ENCODE measurements at regions of chr9 and their contacts with region 1.

Region 1: DNA sequence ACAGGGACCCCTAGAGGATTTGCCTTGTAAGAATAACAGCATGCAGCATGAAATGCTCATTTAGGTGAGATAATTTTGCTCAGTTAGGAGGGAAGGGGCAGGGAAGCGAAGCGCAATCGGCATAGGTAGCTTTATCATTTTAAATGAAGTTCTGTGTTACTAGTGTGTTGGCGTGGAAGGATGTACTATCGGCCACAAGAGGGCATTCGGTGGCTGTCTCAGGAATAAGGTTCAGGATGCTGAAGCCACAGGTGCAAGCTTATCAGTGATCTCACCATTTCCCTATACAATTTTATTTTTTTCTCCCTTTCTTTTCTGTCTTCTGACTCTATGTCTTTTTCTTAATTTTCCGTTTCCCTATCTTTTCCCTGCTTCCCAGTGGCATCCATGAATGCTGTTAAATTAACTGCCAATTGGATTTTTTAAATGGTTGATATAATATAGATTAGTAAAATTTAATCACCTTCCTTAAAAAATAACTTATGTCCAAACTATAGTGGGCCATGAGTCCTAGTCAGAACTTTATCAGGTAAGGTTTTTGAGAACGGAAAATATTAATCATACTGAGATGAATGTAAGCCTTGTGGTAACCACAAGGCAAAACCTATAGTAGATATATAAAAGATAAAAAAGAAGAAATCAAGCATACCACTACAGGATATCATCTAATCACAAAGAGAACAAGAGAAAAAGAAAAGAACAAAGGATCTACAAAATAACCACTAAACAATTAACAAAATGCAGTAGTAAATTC is 1.2 kb upstream of the INSL6 start:
- DNase-seq: peak; percentile 39
- H3K4me3 Mint-ChIP-seq: no peak overlapping the region
- H3K27ac Mint-ChIP-seq: peak overlapping the region; percentile 3
- H3K4me1 Mint-ChIP-seq: peaks cover 22% of the 10 kb centered on the region
- H3K27me3 Mint-ChIP-seq: peaks cover 17% of the 10 kb centered on the region

Region 2: GRCh38 chr9:4750023-4750673 is 436.4 kb before region 1 on chr9:
- intact Hi-C with region 1: loop called (anchors 5 kb)
- DNase-seq: no peak
- H3K4me3 Mint-ChIP-seq: no peak overlapping the region
- H3K27ac Mint-ChIP-seq: no peak overlapping the region
- H3K4me1 Mint-ChIP-seq: peaks cover 12% of the 10 kb centered on the region
- H3K27me3 Mint-ChIP-seq: peaks cover 12% of the 10 kb centered on the region

Region 3: GRCh38 chr9:5425006-5425628 is 238.5 kb after region 1 on chr9:
- intact Hi-C with region 1: loop called (anchors 1 kb)
- DNase-seq: no peak
- H3K4me3 Mint-ChIP-seq: no peak overlapping the region
- H3K27ac Mint-ChIP-seq: no peak overlapping the region
- H3K4me1 Mint-ChIP-seq: peaks cover 9% of the 10 kb centered on the region
- H3K27me3 Mint-ChIP-seq: no peaks in the 10 kb centered on the region

Region 4: GRCh38 chr9:5596173-5596572 is 409.6 kb after region 1 on chr9:
- intact Hi-C with region 1: loop called (anchors 1 kb)
- DNase-seq: no peak
- H3K4me3 Mint-ChIP-seq: no peak overlapping the region
- H3K27ac Mint-ChIP-seq: no peak overlapping the region
- H3K4me1 Mint-ChIP-seq: peaks cover 32% of the 10 kb centered on the region
- H3K27me3 Mint-ChIP-seq: peaks cover 2% of the 10 kb centered on the region

Region 5: GRCh38 chr9:5817869-5818268 is 631.3 kb after region 1 on chr9:
- intact Hi-C with region 1: no loop called
- DNase-seq: no peak
- H3K4me3 Mint-ChIP-seq: no peak overlapping the region
- H3K27ac Mint-ChIP-seq: no peak overlapping the region
- H3K4me1 Mint-ChIP-seq: peaks cover 20% of the 10 kb centered on the region
- H3K27me3 Mint-ChIP-seq: no peaks in the 10 kb centered on the region